Sigmoid colon (tissue), 7 donors: ENCODE measurements at regions of chr15 and their contacts with region 1.

Region 1: GRCh38 chr15:91302588-91303439 is 202.8 kb downstream of the SV2B start:
- DNase-seq: no peak
- H3K4me3 ChIP-seq: no peak overlapping the region
- H3K27ac ChIP-seq: no peak overlapping the region
- H3K4me1 ChIP-seq: peaks cover 0 to 8% (median 2%) of the 10 kb centered on the region in 4 donors
- H3K27me3 ChIP-seq: peaks cover 0 to 20% (median 13%) of the 10 kb centered on the region in 3 donors
- CTCF ChIP-seq: peak; percentile 39 to 67 (median 62)
- EP300 ChIP-seq: no peak
- POLR2A ChIP-seq: no peak

Region 2: DNA sequence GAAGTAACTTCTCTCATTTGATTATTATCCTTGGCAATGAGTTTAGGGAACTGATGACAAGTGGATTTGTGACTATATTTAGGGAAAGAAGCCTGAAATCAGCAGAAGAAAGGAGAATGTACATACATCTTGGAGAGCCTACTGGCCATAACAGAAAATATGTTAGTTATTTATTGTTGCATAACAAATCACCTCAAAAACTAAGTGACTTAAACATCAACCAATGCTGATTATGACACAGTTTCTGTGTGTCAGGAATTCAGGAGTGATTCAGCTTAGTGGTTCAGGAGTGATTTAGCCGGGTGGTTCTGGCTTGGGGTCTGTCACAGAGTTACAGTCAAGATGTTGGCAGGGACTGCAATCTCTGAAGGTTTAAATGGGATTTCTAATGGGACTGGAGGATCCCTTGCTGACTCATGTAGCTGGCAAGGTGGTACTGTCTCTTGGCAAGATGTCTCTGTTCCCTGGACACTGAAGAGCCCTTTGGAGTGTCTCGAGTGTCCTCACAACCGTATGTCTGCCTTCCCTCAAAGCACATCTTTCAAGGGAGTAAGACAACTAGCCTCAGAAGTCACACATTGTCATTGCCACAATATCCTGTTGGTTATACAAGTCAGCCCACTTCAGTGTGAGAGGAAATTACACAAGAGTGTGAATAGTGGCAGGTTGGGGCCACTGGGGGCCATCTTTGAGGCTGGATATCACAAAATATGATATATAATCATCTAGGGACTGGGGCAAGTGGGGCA is 46.1 kb after region 1 on chr15:
- intact Hi-C with region 1: no loop called
- DNase-seq: no peak
- H3K4me3 ChIP-seq: no peak overlapping the region
- H3K27ac ChIP-seq: no peak overlapping the region
- H3K4me1 ChIP-seq: no peaks in the 10 kb centered on the region
- H3K27me3 ChIP-seq: no peaks in the 10 kb centered on the region
- CTCF ChIP-seq: no peak
- EP300 ChIP-seq: no peak
- POLR2A ChIP-seq: no peak

Region 3: DNA sequence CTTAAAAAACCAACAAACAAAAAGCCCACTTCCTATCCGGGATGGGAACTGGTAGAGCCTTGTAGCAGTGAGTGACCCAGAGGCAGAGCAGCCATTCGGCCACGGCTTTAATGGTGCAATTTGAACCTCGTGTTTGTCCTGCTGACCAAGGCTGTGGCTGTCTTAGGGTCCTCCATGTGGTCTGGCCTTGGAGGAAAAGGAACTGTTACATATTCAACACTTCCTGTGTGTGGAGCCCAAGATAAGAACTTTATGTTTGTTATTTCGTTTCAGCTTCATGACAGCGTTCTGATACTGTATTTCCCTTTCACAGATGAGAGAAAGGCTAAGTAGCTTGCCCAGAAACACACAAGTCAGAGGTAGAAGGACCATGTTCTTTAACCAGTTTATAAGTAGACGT is 67.0 kb after region 1 on chr15:
- intact Hi-C with region 1: loop called (anchors 10 kb)
- DNase-seq: no peak
- H3K4me3 ChIP-seq: no peak overlapping the region
- H3K27ac ChIP-seq: no peak overlapping the region
- H3K4me1 ChIP-seq: no peaks in the 10 kb centered on the region
- H3K27me3 ChIP-seq: no peaks in the 10 kb centered on the region
- CTCF ChIP-seq: no peak
- EP300 ChIP-seq: no peak
- POLR2A ChIP-seq: no peak

Region 4: DNA sequence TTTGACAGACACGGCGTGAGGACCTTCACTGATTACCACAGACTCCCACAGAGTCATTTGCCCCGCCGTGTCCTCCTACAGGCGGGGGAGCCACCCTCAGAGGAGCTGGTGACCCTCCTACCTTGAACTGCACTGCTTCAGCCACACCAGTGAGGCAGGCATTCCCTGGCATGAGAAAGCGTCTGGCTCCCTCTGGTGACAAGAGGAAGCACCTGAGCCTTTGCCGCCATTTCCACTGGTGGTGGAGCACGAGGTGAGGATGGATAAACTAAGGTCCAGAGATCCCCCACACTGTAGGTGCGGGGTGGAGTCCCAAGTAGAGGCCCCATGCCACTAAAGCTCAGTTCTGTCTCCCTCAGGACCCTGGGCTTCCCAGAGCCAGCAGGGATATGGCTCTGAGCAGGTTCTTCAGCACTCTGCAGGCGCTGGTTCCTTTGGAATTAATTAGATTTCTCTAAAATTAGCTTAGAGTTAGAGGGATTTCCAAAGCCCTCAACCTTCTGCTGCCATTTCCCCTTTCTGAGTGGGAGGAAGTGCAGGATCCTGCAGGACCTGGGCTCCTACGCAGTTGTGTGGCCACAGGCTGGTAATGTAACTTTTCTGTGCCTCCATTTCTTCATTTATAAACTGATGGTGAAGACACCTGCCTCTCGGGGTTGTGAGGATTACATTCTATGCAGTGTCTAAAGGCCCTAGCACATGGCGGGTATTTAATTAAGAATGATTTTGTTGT is 774.7 kb after region 1 on chr15:
- intact Hi-C with region 1: loop called (anchors 1 kb)
- DNase-seq: peak; percentile 79
- H3K4me3 ChIP-seq: no peak overlapping the region
- H3K27ac ChIP-seq: no peak overlapping the region
- H3K4me1 ChIP-seq: peaks cover 0 to 8% (median 3%) of the 10 kb centered on the region in 4 donors
- H3K27me3 ChIP-seq: no peaks in the 10 kb centered on the region
- CTCF ChIP-seq: peak in 3 of 4 experiments; percentile 47 to 56 (median 49)
- EP300 ChIP-seq: no peak
- POLR2A ChIP-seq: no peak